ENCODE measurements at regions of chr22 and their contacts with region 1.

Region 1: GRCh38 chr22:17570851-17571641 is 7.7 kb downstream of the SLC25A18 start:
- DNase-seq: peak; percentile 27 to 86 (median 74)
- H3K4me3 ChIP-seq: peak overlapping the region in 1 of 4 donors; percentile 27
- H3K27ac ChIP-seq: peak overlapping the region in 4 of 5 donors; percentile 28 to 93 (median 62)
- H3K4me1 ChIP-seq: peaks cover 0 to 9% of the 10 kb centered on the region in 2 donors
- H3K27me3 ChIP-seq: no peaks in the 10 kb centered on the region
- CTCF ChIP-seq: no peak
- POLR2A ChIP-seq: peak in 1 of 2 donors; percentile 21

Region 2: DNA sequence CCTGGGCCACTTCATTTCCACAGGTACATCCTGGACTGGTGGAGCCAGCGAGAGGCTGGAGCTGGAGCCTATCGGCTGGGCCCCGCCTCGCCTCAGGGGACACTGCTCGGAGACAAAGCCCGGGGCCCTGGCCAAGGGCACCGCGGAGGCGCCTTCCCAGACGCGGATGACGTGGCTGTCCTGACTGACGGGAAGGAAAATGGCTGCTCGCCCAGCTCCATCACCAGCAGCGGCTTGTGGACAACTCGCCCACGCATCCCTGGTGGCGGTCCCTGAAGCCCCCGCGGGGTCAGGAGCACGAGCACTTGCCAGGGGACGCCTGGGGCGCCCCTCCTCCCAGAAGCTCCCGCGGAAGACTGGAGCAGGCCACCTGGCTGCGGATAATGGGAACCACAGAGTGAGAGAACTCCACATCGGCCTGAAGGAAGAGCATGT is 152.1 kb before region 1 on chr22:
- intact Hi-C with region 1: no loop called
- DNase-seq: no peak
- H3K4me3 ChIP-seq: no peak overlapping the region
- H3K27ac ChIP-seq: no peak overlapping the region
- H3K4me1 ChIP-seq: no peaks in the 10 kb centered on the region
- H3K27me3 ChIP-seq: no peaks in the 10 kb centered on the region
- CTCF ChIP-seq: no peak
- POLR2A ChIP-seq: no peak

Region 3: DNA sequence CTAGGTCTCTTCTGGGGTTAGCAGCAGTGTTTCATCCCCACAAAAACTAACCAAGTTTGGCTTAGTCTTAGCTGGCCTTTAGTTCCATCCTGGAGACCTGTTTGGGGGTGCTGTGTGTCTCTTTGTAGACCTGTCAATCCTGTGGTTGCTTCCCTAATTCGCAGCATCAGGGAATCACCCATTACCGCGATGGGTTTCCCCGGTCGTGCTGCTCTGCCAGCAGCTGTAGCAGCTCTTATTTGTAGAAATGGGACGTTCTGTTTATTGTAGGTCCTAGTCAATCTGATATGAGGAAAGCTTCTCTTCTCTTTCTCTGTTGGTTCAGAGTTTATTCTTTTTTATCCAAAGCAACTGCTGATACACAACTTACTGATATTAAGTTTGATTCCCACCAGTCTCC is 110.2 kb before region 1 on chr22:
- intact Hi-C with region 1: no loop called
- DNase-seq: no peak
- H3K4me3 ChIP-seq: no peak overlapping the region
- H3K27ac ChIP-seq: no peak overlapping the region
- H3K4me1 ChIP-seq: no peaks in the 10 kb centered on the region
- H3K27me3 ChIP-seq: no peaks in the 10 kb centered on the region
- CTCF ChIP-seq: no peak
- POLR2A ChIP-seq: no peak

Region 4: DNA sequence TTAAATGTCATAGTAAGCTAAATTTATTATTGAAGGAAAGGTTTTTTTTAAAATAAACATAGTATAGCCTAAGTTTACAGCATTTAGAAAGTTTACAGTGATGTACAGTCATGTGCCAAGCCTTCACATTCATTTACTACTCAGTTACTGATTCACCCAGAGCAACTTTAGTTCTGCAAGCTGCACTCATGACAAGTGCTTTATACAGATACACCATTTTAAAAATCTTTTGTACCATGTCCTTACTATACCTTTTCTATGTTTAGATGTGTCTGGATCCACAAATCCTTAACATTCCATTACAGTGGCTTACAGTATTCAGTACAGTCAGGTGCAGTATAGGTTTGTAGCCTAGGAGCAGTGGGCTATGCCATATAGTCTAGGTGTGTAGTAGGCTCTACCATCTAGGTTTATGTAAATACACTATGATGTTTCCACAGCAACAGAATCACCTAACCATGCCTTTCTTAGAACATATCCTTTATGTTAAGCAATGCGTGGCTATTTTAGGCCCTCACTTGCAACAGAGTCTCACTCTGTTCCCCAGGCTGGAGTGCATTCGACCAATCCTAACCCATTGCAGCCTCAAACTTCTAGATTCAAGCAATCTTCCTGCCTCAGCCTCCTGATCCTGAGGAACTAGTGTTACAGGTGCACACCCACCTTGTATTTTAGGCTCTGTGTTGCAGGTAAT is 87.2 kb before region 1 on chr22:
- intact Hi-C with region 1: no loop called
- DNase-seq: no peak
- H3K4me3 ChIP-seq: no peak overlapping the region
- H3K27ac ChIP-seq: no peak overlapping the region
- H3K4me1 ChIP-seq: no peaks in the 10 kb centered on the region
- H3K27me3 ChIP-seq: no peaks in the 10 kb centered on the region
- CTCF ChIP-seq: no peak
- POLR2A ChIP-seq: no peak

Region 5: GRCh38 chr22:17606496-17606895 is 35.5 kb after region 1 on chr22:
- intact Hi-C with region 1: no loop called
- DNase-seq: peak in 1 of 7 donors; percentile 52
- H3K4me3 ChIP-seq: no peak overlapping the region
- H3K27ac ChIP-seq: no peak overlapping the region
- H3K4me1 ChIP-seq: peaks cover 8 to 12% of the 10 kb centered on the region in 2 donors
- H3K27me3 ChIP-seq: no peaks in the 10 kb centered on the region
- CTCF ChIP-seq: no peak
- POLR2A ChIP-seq: no peak

Region 6: GRCh38 chr22:17638432-17639246 is 67.6 kb after region 1 on chr22 and contains the start of gene BCL2L13:
- intact Hi-C with region 1: loop called in 1 of 2 experiments (anchors 10 kb)
- DNase-seq: peak; percentile 91 to 97 (median 93)
- H3K4me3 ChIP-seq: peak within 1 kb of the TSS; percentile 49 to 99 (median 62)
- H3K27ac ChIP-seq: peak within 1 kb of the TSS; percentile 97 to 100 (median 99)
- H3K4me1 ChIP-seq: peaks cover 17 to 29% of the 10 kb centered on the region in 2 donors
- H3K27me3 ChIP-seq: no peaks in the 10 kb centered on the region
- CTCF ChIP-seq: peak in 3 of 6 experiments; percentile 6 to 30 (median 21)
- POLR2A ChIP-seq: peak; percentile 87 to 98
- total RNA-seq, gene BCL2L13: 64.7 to 142 (median 98.4) TPM

Measured in adrenal gland (tissue), 19 donors.